Caco-2 (cell line): ENCODE measurements at regions of chr11 and their contacts with region 1.

Region 1: DNA sequence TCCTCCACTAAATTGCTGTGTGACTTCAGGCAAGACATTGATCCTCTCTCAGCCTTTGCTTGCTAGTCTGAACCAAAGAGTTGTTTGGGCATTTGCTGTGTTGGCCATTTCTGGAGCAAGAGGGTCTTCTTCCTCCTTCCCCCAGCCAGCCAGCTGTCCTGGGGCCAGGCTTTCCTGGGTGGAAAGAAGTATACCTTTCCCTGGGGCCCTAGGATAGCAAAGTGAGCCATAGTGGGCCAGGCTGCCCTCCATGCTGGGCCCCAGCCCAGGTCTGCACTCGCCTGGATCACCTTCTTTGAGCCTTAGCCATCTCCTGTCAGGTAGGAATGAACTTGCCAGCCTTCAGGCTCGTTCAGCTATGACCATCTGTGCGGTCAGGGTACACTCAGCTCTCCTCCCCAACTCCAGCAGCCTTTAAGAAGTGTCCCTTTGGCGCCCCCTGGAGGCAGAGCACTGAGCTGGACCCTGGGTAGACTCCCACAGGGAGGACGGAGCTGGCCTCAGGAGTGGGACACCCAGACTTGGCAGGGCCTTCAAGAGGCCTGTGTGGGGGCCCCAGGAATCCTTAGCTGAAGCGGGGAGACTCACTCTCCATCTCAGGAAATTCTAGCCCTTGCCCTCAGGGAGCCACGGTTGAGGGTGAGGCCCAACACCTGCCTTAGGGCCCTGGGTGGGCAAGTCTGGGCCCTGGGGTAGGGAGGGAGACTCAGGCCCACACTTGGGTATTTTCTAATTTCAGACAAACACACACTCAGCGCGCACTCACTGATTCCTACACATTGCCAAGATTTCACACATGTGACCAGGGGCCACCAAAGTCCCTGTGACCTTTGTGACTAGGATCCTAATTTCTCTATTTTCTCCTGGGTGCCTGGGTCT is 35.6 kb upstream of the TPBGL start:
- DNase-seq: peak; percentile 95 to 97
- H3K4me3 ChIP-seq: no peak overlapping the region
- H3K4me3 Mint-ChIP-seq: no peak overlapping the region
- H3K27ac Mint-ChIP-seq: no peak overlapping the region
- H3K4me1 ChIP-seq: peaks cover 26% of the 10 kb centered on the region
- H3K4me1 Mint-ChIP-seq: peaks cover 16% of the 10 kb centered on the region
- H3K27me3 ChIP-seq: no peaks in the 10 kb centered on the region
- H3K27me3 Mint-ChIP-seq: no peaks in the 10 kb centered on the region
- CTCF ChIP-seq: peak; percentile 98 to 99

Region 2: GRCh38 chr11:74299015-74299414 is 905.9 kb before region 1 on chr11:
- CTCF ChIA-PET with region 1: no interaction called
- POLR2A ChIA-PET with region 1: no interaction called
- intact Hi-C with region 1: no loop called
- DNase-seq: no peak
- H3K4me3 ChIP-seq: no peak overlapping the region
- H3K4me3 Mint-ChIP-seq: no peak overlapping the region
- H3K27ac Mint-ChIP-seq: no peak overlapping the region
- H3K4me1 ChIP-seq: no peaks in the 10 kb centered on the region
- H3K4me1 Mint-ChIP-seq: no peaks in the 10 kb centered on the region
- H3K27me3 ChIP-seq: no peaks in the 10 kb centered on the region; the same call in 1 of the 2 replicates
- H3K27me3 Mint-ChIP-seq: peaks cover 9% of the 10 kb centered on the region
- CTCF ChIP-seq: no peak

Region 3: GRCh38 chr11:74929431-74930363 is 275.2 kb before region 1 on chr11:
- CTCF ChIA-PET with region 1: interaction called, 12 read pairs
- POLR2A ChIA-PET with region 1: no interaction called
- intact Hi-C with region 1: no loop called
- DNase-seq: peak; percentile 84
- H3K4me3 ChIP-seq: no peak overlapping the region
- H3K4me3 Mint-ChIP-seq: no peak overlapping the region
- H3K27ac Mint-ChIP-seq: no peak overlapping the region
- H3K4me1 ChIP-seq: 0 out of 2 replicates have a peak, but pooled peaks cover 6% of the 10 kb centered on the region
- H3K4me1 Mint-ChIP-seq: no peaks in the 10 kb centered on the region
- H3K27me3 ChIP-seq: no peaks in the 10 kb centered on the region
- H3K27me3 Mint-ChIP-seq: no peaks in the 10 kb centered on the region
- CTCF ChIP-seq: peak; percentile 96

Region 4: DNA sequence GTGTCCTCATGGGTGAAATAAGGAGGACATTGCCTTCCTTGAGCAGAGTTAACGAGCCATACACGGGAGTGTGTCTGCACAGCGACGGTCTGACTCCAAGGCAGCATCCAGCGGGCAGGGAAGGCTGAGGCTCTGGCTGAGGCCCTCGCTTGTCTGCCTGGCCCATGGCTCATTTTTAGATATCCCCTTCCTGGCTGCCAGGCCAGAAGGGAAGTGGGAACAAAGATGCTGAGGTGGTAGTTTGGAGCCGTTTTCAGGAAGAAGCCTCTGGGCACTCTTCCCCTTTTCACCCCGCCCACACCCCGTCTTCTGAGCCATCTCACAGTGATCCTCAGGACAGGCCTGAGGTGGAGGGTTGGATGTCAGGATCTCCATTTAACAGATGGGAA is 57.1 kb before region 1 on chr11:
- CTCF ChIA-PET with region 1: interaction called, 887 read pairs
- POLR2A ChIA-PET with region 1: interaction called, 6 read pairs
- intact Hi-C with region 1: loop called (anchors 1 kb)
- DNase-seq: no peak
- H3K4me3 ChIP-seq: no peak overlapping the region
- H3K4me3 Mint-ChIP-seq: no peak overlapping the region
- H3K27ac Mint-ChIP-seq: peak overlapping the region; percentile 75
- H3K4me1 ChIP-seq: peaks cover 91% of the 10 kb centered on the region
- H3K4me1 Mint-ChIP-seq: peaks cover 59% of the 10 kb centered on the region
- H3K27me3 ChIP-seq: no peaks in the 10 kb centered on the region
- H3K27me3 Mint-ChIP-seq: no peaks in the 10 kb centered on the region
- CTCF ChIP-seq: no peak

Region 5: DNA sequence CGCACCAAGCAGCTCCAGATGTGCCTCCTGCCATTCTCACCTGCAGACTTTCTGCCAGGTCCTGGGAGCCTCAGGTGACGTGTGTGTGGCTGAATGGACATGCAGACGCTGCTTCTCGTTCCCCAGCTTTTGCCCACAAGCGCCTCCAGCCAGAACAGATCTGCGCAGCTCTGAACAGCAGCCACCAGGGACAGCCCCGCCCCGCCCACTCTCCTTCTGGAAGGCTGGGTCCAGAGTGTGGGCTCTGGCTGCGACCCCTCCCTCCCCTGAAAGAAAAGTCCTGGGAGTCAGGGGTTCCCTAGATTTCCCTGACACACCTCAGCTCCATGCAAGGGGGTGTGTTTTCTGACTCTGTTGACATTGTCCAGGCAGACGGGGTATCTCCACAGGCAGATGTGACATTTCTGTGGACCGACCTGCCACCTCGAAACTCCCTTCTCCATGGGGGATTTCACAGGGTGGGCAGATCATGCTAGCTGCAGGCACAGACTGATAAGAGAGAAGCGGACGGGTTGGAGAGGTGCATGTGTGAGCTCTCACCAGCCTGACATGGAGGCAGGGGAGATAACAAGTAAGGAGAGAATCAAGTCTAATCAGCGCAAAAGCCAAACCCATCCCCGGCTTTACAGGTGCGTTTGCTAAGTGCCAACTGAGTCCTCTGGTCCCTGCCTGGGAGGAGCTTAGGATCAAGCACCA is 34.3 kb before region 1 on chr11:
- CTCF ChIA-PET with region 1: interaction called, 66 read pairs
- POLR2A ChIA-PET with region 1: interaction called, 9 read pairs
- intact Hi-C with region 1: loop called (anchors 1 kb)
- DNase-seq: peak in 1 of 2 experiments; percentile 50
- H3K4me3 ChIP-seq: no peak overlapping the region
- H3K4me3 Mint-ChIP-seq: no peak overlapping the region
- H3K27ac Mint-ChIP-seq: peak overlapping the region; percentile 94
- H3K4me1 ChIP-seq: peaks cover 60% of the 10 kb centered on the region
- H3K4me1 Mint-ChIP-seq: peaks cover 61% of the 10 kb centered on the region
- H3K27me3 ChIP-seq: no peaks in the 10 kb centered on the region
- H3K27me3 Mint-ChIP-seq: no peaks in the 10 kb centered on the region
- CTCF ChIP-seq: no peak

Region 6: DNA sequence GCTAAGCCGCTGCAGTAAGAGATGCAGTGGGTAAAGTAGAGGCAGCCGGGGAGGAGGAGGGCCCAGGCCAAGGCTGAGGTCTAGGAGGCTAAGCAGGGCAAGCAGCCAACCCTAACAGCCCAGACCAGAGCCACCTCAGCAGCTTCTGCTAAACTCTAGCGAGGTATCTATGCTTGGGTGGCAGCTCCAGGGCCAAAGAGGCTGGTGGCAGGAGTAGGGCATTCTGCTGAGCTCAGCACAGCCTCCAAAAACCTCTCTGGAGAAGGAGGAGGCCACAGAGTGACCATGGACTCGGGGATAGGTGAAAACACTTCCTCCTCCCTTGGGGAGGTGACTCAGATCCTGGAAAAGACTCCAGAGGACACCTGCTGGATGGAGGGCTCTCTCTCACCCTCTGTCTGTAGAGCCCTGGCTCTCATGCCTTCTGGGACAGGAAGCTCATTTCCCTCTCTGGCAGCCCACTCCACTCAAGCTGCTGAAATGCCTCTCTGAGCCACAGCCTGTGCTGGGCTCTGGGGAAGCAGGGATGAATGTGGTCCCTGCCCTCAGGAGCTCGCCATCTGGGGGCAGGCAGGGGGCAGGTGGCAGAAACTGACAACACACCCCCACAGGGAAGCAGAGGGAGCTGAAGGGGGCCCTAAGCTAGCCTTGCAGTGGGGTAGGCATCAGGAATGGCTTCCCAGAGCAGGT is 19.2 kb after region 1 on chr11:
- CTCF ChIA-PET with region 1: interaction called, 16 read pairs
- POLR2A ChIA-PET with region 1: no interaction called
- intact Hi-C with region 1: no loop called
- DNase-seq: peak in 1 of 2 experiments; percentile 55
- H3K4me3 ChIP-seq: no peak overlapping the region
- H3K4me3 Mint-ChIP-seq: no peak overlapping the region
- H3K27ac Mint-ChIP-seq: no peak overlapping the region
- H3K4me1 ChIP-seq: no peaks in the 10 kb centered on the region
- H3K4me1 Mint-ChIP-seq: no peaks in the 10 kb centered on the region
- H3K27me3 ChIP-seq: no peaks in the 10 kb centered on the region
- H3K27me3 Mint-ChIP-seq: no peaks in the 10 kb centered on the region
- CTCF ChIP-seq: peak; percentile 30 to 54